GM12878 (cell line): ENCODE measurements at regions of chr15 and their contacts with region 1.

Region 1: GRCh38 chr15:78979456-78980320 is 34.8 kb upstream of the CTSH start:
- DNase-seq: peak; percentile 66
- ATAC-seq: peak; percentile 45
- H3K4me3 ChIP-seq: peak overlapping the region; percentile 69
- H3K27ac ChIP-seq: peak overlapping the region; percentile 96
- H3K4me1 ChIP-seq: peaks cover 49% of the 10 kb centered on the region
- H3K27me3 ChIP-seq: no peaks in the 10 kb centered on the region
- CTCF ChIP-seq: peak; percentile 71 to 87 (median 77)
- EP300 ChIP-seq: no peak
- POLR2A ChIP-seq: no peak
- RAD21 ChIP-seq: peak; percentile 71

Region 2: DNA sequence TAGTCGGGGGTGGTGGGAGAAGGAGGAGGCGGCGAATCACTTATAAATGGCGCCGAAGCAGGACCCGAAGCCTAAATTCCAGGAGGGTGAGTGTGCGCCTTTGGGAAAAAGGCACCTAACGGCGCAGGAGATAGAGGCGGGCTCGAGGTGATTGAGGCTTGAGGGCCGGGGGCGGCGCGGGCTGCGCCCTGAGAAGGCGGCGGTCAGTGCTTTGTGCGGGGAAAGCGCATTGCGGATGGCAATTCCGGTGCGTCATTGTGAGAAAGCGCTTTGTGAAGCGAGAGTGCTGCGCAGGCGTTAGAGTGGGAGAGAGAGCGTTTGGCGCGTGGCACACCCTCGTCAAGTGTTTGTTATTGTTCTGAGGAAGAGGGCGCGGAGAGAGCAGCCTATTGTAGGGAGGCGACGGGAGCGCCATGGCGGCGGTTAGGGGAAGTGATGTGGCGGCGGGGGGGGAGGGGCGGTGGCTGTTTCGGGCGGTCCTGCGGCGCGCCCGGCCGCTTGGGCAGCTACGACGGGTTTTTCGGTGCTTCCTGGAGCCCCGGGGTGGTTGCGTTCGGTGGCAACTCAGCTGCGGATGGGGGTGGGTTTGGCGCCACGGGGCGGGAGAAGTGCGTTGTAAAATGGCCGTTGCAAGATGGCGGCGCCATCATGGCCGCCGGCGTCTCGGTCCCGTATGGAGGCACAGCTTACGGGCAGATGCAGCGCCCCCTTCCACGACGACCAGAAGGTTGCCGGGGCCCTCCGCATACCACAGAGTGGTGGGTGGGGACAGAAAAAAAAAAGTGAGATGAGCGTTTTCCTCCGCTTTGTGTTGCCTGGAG is 106.5 kb before region 1 on chr15:
- CTCF ChIA-PET with region 1: interaction called, 10 read pairs
- POLR2A ChIA-PET with region 1: interaction called, 4 read pairs
- RAD21 ChIA-PET with region 1: interaction called, 4 read pairs
- SMC1A ChIA-PET with region 1: interaction called, 3 read pairs
- in situ Hi-C with region 1: no loop called
- intact Hi-C with region 1: no loop called
- DNase-seq: peak; percentile 53
- ATAC-seq: peak; percentile 83
- H3K4me3 ChIP-seq: peak overlapping the region; percentile 90
- H3K27ac ChIP-seq: peak overlapping the region; percentile 99
- H3K4me1 ChIP-seq: peaks cover 3% of the 10 kb centered on the region; the same call in 1 of the 2 replicates
- H3K27me3 ChIP-seq: no peaks in the 10 kb centered on the region
- CTCF ChIP-seq: peak; percentile 42 to 58 (median 54)
- EP300 ChIP-seq: no peak
- POLR2A ChIP-seq: peak; percentile 92
- RAD21 ChIP-seq: no peak

Region 3: DNA sequence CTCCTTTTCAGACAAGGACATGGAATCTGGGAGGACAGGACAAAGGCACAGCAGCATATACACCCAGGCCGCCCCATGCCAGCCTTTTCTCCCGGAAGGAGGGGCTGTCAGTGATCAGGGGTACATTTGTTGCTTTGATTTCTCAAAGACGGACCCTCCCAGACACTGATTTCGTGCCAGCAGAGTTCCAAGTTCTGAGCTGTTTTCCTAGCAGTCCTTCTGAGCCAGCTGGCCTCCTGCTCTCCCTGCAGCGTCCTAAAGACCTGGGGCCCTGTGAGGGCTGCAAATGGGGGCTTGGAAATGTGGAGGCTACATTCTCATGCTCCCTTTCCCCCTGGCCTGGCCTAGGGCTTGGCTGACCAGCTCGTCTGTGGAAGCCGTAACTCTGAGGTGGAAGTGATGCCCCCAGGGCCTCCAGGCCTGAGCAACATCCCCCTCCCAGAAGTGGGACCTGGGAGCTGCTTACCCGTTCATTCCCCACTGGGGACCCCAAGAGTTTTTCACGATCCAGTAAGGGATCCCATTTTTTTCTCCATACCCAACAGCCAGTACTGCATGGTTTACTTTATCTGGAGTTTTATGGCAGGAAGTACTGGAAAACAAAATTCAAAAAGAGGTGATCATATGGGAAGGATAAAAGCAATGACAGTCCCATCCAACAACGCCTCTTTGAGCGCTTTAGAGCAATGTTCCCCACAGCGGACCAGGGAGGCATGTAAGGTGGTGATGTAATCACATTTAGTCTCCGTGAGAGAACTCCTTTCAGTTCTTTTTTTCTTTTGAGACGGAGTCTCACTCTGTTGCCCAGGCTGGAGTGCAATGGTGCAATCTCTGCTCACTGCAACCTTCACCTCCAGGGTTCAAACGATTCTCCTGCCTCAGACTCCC is 56.9 kb before region 1 on chr15:
- CTCF ChIA-PET with region 1: interaction called, 12 read pairs
- POLR2A ChIA-PET with region 1: interaction called, 3 read pairs
- RAD21 ChIA-PET with region 1: interaction called, 5 read pairs
- SMC1A ChIA-PET with region 1: interaction called, 8 read pairs
- in situ Hi-C with region 1: no loop called
- intact Hi-C with region 1: no loop called
- DNase-seq: no peak
- ATAC-seq: no peak
- H3K4me3 ChIP-seq: no peak overlapping the region
- H3K27ac ChIP-seq: no peak overlapping the region
- H3K4me1 ChIP-seq: no peaks in the 10 kb centered on the region; the same call in 1 of the 2 replicates
- H3K27me3 ChIP-seq: no peaks in the 10 kb centered on the region
- CTCF ChIP-seq: no peak
- EP300 ChIP-seq: no peak
- POLR2A ChIP-seq: peak; percentile 31; the same call in 1 of the 2 replicates
- RAD21 ChIP-seq: no peak

Region 4: GRCh38 chr15:78944669-78945407 is 34.9 kb before region 1 on chr15 and contains the start of gene CTSH:
- CTCF ChIA-PET with region 1: interaction called, 43 read pairs
- POLR2A ChIA-PET with region 1: interaction called, 40 read pairs
- RAD21 ChIA-PET with region 1: interaction called, 53 read pairs
- SMC1A ChIA-PET with region 1: interaction called, 79 read pairs
- in situ Hi-C with region 1: no loop called
- intact Hi-C with region 1: no loop called
- DNase-seq: no peak
- ATAC-seq: peak; percentile 84
- H3K4me3 ChIP-seq: peak within 1 kb of the TSS; percentile 96
- H3K27ac ChIP-seq: peak within 1 kb of the TSS; percentile 96
- H3K4me1 ChIP-seq: peaks cover 4% of the 10 kb centered on the region; the same call in 1 of the 2 replicates
- H3K27me3 ChIP-seq: no peaks in the 10 kb centered on the region; a peak in 1 of 4 replicates
- CTCF ChIP-seq: no peak
- EP300 ChIP-seq: no peak
- POLR2A ChIP-seq: peak; percentile 91
- RAD21 ChIP-seq: 0 out of 2 replicates have a peak, but pooled peaks have one; percentile 9
- polyA plus RNA-seq, gene CTSH: 30.2 to 88.2 TPM

Region 5: GRCh38 chr15:78996894-78997275 is 17.2 kb after region 1 on chr15:
- CTCF ChIA-PET with region 1: interaction called, 20 read pairs
- POLR2A ChIA-PET with region 1: interaction called, 6 read pairs
- RAD21 ChIA-PET with region 1: interaction called, 3 read pairs
- SMC1A ChIA-PET with region 1: interaction called, 11 read pairs
- in situ Hi-C with region 1: no loop called
- intact Hi-C with region 1: no loop called
- DNase-seq: no peak
- ATAC-seq: no peak
- H3K4me3 ChIP-seq: no peak overlapping the region
- H3K27ac ChIP-seq: no peak overlapping the region
- H3K4me1 ChIP-seq: peaks cover 14% of the 10 kb centered on the region
- H3K27me3 ChIP-seq: no peaks in the 10 kb centered on the region
- CTCF ChIP-seq: no peak
- EP300 ChIP-seq: no peak
- POLR2A ChIP-seq: no peak
- RAD21 ChIP-seq: no peak

Region 6: GRCh38 chr15:79028411-79028964 is 48.8 kb after region 1 on chr15:
- CTCF ChIA-PET with region 1: interaction called, 12 read pairs
- POLR2A ChIA-PET with region 1: interaction called, 3 read pairs
- RAD21 ChIA-PET with region 1: interaction called, 3 read pairs
- SMC1A ChIA-PET with region 1: interaction called, 5 read pairs
- in situ Hi-C with region 1: no loop called
- intact Hi-C with region 1: no loop called
- DNase-seq: no peak
- ATAC-seq: peak; percentile 76
- H3K4me3 ChIP-seq: no peak overlapping the region
- H3K27ac ChIP-seq: no peak overlapping the region
- H3K4me1 ChIP-seq: no peaks in the 10 kb centered on the region
- H3K27me3 ChIP-seq: no peaks in the 10 kb centered on the region
- CTCF ChIP-seq: peak; percentile 89 to 97 (median 90)
- EP300 ChIP-seq: no peak
- POLR2A ChIP-seq: no peak
- RAD21 ChIP-seq: peak; percentile 95

Region 7: DNA sequence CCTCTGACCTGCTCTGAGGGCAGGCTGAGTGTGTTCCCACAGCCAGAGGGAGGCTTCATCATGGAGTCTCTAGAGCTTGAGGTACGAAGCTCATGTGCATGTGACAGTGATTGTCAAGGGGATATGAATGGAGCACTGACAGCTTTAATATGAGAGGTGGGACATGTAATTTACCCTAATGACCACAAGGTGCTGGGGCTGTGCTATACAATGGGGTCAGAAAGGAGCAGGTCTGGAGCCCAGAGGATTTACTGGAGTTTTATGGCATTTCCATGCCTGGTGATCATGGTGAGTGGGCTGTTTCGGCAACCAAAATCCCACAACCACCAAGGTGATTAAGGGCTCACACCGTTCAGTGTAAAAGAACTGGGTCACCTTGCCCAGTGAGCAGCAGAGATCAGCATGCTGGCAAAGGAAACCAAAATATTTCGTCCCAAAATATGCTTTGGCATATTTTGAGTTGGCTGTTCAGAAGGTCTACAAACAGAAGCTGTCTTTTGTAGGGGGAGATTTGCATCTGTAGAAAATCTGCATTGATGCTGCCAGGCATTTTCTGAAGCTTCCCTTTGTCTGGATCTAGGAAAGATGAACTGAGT is 150.9 kb after region 1 on chr15:
- CTCF ChIA-PET with region 1: no interaction called
- POLR2A ChIA-PET with region 1: no interaction called
- RAD21 ChIA-PET with region 1: no interaction called
- SMC1A ChIA-PET with region 1: no interaction called
- in situ Hi-C with region 1: no loop called
- intact Hi-C with region 1: no loop called
- DNase-seq: no peak
- ATAC-seq: no peak
- H3K4me3 ChIP-seq: no peak overlapping the region
- H3K27ac ChIP-seq: no peak overlapping the region
- H3K4me1 ChIP-seq: no peaks in the 10 kb centered on the region
- H3K27me3 ChIP-seq: peaks cover 0 to 3% of the 10 kb centered on the region in 2 experiments; a peak in 1 of 4 replicates
- CTCF ChIP-seq: peak in 2 of 3 experiments; percentile 30; a peak in 3 of 6 replicates
- EP300 ChIP-seq: no peak
- POLR2A ChIP-seq: no peak
- RAD21 ChIP-seq: no peak

Region 8: GRCh38 chr15:79218588-79219164 is 239.0 kb after region 1 on chr15:
- CTCF ChIA-PET with region 1: no interaction called
- POLR2A ChIA-PET with region 1: no interaction called
- RAD21 ChIA-PET with region 1: no interaction called
- SMC1A ChIA-PET with region 1: no interaction called
- in situ Hi-C with region 1: no loop called
- intact Hi-C with region 1: no loop called
- DNase-seq: no peak
- ATAC-seq: no peak
- H3K4me3 ChIP-seq: no peak overlapping the region
- H3K27ac ChIP-seq: no peak overlapping the region
- H3K4me1 ChIP-seq: no peaks in the 10 kb centered on the region
- H3K27me3 ChIP-seq: peaks cover 0 to 9% of the 10 kb centered on the region in 2 experiments; a peak in 3 of 4 replicates
- CTCF ChIP-seq: peak in 2 of 3 experiments; percentile 9 to 16; a peak in 2 of 6 replicates
- EP300 ChIP-seq: no peak
- POLR2A ChIP-seq: no peak
- RAD21 ChIP-seq: no peak